CD8-positive, alpha-beta T cell (primary cell): ENCODE measurements at regions of chr12 and their contacts with region 1.

Region 1: DNA sequence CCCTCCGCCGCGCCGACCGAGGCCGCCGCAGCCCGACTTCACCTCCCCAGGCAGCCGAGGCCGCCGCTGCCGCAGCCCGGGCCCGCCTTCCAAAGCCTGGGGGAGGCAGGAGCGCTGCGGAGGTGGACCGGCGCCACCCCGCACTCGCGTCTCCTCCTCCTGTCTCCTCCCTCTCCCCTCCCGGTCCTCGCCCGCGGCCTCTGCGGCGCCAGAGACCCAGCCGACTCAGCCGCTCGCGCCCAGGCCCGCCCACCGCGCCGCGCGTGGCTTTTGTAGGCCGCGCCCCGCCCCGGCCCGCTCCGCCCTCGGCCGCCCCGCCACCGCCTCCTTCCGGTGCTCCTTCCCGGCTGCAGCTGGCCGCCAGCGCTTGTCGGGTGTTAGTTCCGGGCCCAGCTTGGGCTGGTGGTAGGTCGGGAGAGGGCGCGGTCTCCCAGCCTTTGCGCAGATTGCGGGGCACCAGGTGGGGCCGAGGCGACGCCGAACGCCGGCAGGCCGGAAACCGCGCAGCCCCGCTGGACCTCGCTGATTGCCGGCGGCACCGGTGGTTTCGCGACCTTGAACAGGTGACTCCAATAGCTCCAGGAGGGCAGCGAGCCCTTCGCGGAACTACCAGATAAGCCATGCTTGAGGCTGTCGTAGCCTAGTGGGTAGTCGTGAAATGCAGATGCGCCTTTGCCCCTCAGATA is at the start of gene CAPRIN2:
- DNase-seq: peak; percentile 89 to 98 (median 93)
- ATAC-seq: peak; percentile 90
- H3K4me3 ChIP-seq: peak within 1 kb of the TSS; percentile 69 to 74
- H3K4me3 Mint-ChIP-seq: peak within 1 kb of the TSS; percentile 92
- H3K27ac ChIP-seq: peak within 1 kb of the TSS; percentile 66 to 69
- H3K27ac Mint-ChIP-seq: peak within 1 kb of the TSS; percentile 86
- H3K4me1 ChIP-seq: peaks cover 19% of the 10 kb centered on the region
- H3K4me1 Mint-ChIP-seq: peaks cover 44% of the 10 kb centered on the region
- H3K27me3 ChIP-seq: no peaks in the 10 kb centered on the region
- H3K27me3 Mint-ChIP-seq: no peaks in the 10 kb centered on the region
- CTCF ChIP-seq: no peak
- total RNA-seq, gene CAPRIN2: 16.2 to 17.4 TPM

Region 2: GRCh38 chr12:29103539-29103974 is 1651.3 kb before region 1 on chr12:
- CTCF ChIA-PET with region 1: no interaction called
- POLR2A ChIA-PET with region 1: no interaction called
- intact Hi-C with region 1: loop called in 1 of 2 experiments (anchors 10 kb)
- DNase-seq: peak in 7 of 9 experiments; percentile 10 to 87 (median 44)
- ATAC-seq: peak; percentile 88
- H3K4me3 ChIP-seq: peak overlapping the region; percentile 7 to 33
- H3K4me3 Mint-ChIP-seq: peak overlapping the region; percentile 72
- H3K27ac ChIP-seq: peak overlapping the region; percentile 39 to 73
- H3K27ac Mint-ChIP-seq: peak overlapping the region; percentile 95
- H3K4me1 ChIP-seq: peaks cover 29% of the 10 kb centered on the region
- H3K4me1 Mint-ChIP-seq: peaks cover 39% of the 10 kb centered on the region
- H3K27me3 ChIP-seq: no peaks in the 10 kb centered on the region
- H3K27me3 Mint-ChIP-seq: no peaks in the 10 kb centered on the region
- CTCF ChIP-seq: no peak

Region 3: GRCh38 chr12:30695199-30696103 is 59.4 kb before region 1 on chr12 and contains the start of gene IPO8:
- CTCF ChIA-PET with region 1: interaction called, 3 read pairs
- POLR2A ChIA-PET with region 1: interaction called, 20 read pairs
- intact Hi-C with region 1: loop called (anchors 1 kb)
- DNase-seq: peak; percentile 65 to 93 (median 85)
- ATAC-seq: peak; percentile 93
- H3K4me3 ChIP-seq: peak within 1 kb of the TSS; percentile 63 to 96
- H3K4me3 Mint-ChIP-seq: peak within 1 kb of the TSS; percentile 98
- H3K27ac ChIP-seq: peak within 1 kb of the TSS; percentile 50 to 59
- H3K27ac Mint-ChIP-seq: peak within 1 kb of the TSS; percentile 93
- H3K4me1 ChIP-seq: peaks cover 35% of the 10 kb centered on the region
- H3K4me1 Mint-ChIP-seq: peaks cover 51% of the 10 kb centered on the region
- H3K27me3 ChIP-seq: no peaks in the 10 kb centered on the region
- H3K27me3 Mint-ChIP-seq: no peaks in the 10 kb centered on the region
- CTCF ChIP-seq: no peak
- total RNA-seq, gene IPO8: 21.0 to 22.7 TPM

Region 4: DNA sequence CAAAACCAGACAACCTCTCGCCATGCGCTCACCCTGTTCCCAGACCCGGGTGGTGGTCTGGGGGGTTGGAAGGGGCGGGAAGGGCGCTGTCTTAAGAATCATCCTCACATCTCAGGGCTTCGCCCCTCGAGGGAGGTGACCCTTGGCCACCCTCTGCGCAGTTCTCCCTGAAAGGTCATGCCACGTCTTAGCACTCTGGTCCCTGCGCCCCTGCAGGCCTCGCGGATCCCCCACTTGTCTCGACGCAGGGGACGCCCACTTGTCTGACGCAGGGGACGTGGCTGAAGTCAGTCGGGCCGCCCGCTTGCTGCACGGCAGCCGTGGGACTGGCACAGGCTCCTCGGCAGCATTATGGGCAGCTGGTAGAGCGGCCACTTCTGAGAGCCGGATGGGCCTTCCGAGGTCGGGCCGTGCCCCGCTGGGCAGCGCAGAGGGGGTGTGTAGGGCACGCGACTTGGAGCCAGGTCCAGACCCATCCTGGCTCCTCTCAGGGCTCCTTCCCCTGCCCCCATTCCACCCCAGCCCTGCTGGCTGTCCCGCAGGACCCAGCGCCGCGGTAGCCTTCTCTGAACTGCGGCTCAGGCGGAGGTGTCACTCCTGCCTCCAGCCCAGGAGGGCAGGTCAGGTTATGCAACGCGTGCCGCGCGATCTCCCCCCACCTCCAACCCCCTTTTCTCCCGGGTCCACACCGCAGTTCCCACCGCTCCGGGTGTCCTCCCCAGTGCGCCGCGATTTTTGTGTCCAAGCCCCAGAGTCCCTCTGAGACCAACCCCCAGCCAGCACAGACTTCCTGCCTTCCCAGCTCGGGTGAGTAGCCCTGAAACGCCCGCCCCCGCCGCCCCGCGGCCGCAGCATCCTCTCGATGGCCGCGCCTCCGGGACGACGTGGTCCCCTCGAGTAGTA is 40.8 kb after region 1 on chr12:
- CTCF ChIA-PET with region 1: no interaction called
- POLR2A ChIA-PET with region 1: interaction called, 3 read pairs
- intact Hi-C with region 1: loop called in 1 of 2 experiments (anchors 2 kb)
- DNase-seq: peak; percentile 16 to 68 (median 46)
- ATAC-seq: peak; percentile 63
- H3K4me3 ChIP-seq: peak overlapping the region; percentile 55 to 64
- H3K4me3 Mint-ChIP-seq: peak overlapping the region; percentile 76
- H3K27ac ChIP-seq: no peak overlapping the region
- H3K27ac Mint-ChIP-seq: no peak overlapping the region
- H3K4me1 ChIP-seq: peaks cover 14% of the 10 kb centered on the region
- H3K4me1 Mint-ChIP-seq: peaks cover 16% of the 10 kb centered on the region
- H3K27me3 ChIP-seq: peaks cover 0 to 4% of the 10 kb centered on the region in 2 experiments
- H3K27me3 Mint-ChIP-seq: peaks cover 40% of the 10 kb centered on the region
- CTCF ChIP-seq: no peak